Right ventricle myocardium inferior (tissue), 1 donor: ENCODE measurements at regions of chr4 and their contacts with region 1.

Region 1: GRCh38 chr4:5050520-5051277 is 581 bp upstream of the STK32B start:
- DNase-seq: peak; percentile 82
- ATAC-seq: peak; percentile 89

Region 2: GRCh38 chr4:5142726-5143125 is 92.0 kb after region 1 on chr4:
- intact Hi-C with region 1: loop called (anchors 5 kb)
- DNase-seq: no peak
- ATAC-seq: no peak

Region 3: GRCh38 chr4:5812506-5813229 is 762.0 kb after region 1 on chr4:
- intact Hi-C with region 1: loop called (anchors 2 kb)
- DNase-seq: no peak
- ATAC-seq: peak; percentile 73